ENCODE measurements at regions of chr1 and their contacts with region 1.

Region 1: DNA sequence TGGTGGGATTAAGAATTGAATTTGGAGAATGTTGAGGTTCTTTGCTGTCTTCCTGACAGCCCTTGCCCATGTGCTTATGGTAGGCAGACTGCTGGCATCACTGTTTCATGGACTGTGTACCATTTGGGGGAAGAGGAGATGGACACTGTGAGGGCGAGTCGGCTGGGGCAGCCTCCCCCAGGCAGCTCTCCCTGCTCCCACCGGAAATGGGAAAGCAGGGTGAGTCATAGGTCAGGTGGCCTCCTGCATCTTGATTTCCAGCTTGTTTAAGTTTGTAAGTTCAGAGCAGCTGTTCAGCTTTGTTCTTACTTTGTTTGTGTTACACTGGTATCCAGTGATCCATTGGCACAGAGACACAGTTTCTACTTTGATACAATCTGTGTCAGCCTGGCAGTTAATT is 87.2 kb upstream of the CNIH3 start:
- DNase-seq: no peak
- ATAC-seq: no peak
- H3K4me3 ChIP-seq: no peak overlapping the region
- H3K27ac ChIP-seq: no peak overlapping the region
- H3K4me1 ChIP-seq: no peaks in the 10 kb centered on the region
- H3K27me3 ChIP-seq: no peaks in the 10 kb centered on the region
- CTCF ChIP-seq: no peak

Region 2: DNA sequence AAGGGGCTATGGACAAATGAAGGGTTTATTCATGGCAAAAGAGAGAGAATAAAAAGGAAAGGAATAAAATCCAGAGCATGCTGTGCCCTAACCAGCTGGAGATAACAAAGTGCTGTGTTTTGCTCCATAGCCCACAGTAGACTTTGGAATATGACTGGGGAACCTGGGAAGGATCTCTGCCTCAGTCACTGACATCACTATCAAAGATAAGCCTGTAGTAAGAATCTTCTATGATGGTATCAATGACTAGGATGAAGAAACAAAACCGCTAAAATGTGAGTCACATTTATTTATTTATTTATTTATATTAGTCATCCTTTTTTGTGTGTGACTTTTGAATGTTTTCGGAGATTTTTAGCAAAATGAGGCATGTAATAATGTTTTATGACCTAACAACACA is 255.3 kb before region 1 on chr1:
- intact Hi-C with region 1: no loop called
- DNase-seq: no peak
- ATAC-seq: no peak
- H3K4me3 ChIP-seq: no peak overlapping the region
- H3K27ac ChIP-seq: no peak overlapping the region
- H3K4me1 ChIP-seq: peaks cover 0 to 4% (median 0%) of the 10 kb centered on the region in 9 donors
- H3K27me3 ChIP-seq: no peaks in the 10 kb centered on the region
- CTCF ChIP-seq: no peak

Region 3: DNA sequence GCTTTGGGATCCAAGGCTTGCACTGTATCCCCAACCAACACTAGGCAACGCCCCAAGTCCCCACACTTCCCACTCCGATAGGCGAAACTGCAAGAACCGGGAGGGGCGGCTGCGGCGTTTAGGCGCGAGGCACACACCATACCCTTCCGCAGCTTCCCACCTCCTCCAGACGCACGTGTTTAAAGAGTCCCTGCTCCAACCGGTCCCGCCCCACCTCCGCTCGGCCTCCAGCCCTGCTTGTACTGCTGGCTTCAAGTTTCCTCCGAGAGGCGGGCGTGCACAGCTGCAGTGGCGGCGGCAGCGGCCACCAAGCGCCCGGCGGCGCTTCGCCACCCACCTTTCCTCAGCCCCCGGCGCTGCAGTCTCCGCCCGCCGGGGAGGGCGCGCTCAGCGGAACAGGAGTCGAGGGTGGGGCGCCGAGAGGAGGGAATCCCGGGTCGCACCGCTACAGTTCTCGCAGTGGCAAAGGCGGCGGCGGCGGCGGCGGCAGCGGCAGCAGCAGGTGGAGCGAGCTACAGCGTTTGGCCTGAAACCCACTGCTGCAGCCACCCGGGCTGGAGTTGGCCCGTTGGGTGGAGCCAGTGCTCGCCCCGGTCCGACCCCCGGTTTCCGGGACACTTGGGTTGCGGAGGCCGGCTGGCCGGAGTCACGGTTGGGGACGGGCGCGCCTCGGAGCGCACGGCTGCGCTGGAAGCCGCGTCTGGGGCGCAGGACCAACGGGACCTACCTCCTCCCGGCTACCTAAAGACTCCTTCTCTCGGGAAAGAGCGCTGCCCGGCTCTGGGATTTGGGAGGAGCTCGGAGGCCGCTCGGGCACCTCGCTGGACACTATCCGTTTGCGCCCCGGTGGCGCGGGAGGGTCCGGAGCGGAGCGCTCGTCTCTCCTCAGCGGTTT is 87.2 kb after region 1 on chr1 and contains the start of gene CNIH3:
- intact Hi-C with region 1: loop called in 1 of 10 experiments (anchors 10 kb)
- DNase-seq: no peak
- ATAC-seq: peak in 2 of 8 donors; percentile 18 to 23
- H3K4me3 ChIP-seq: peak within 1 kb of the TSS; percentile 18 to 60 (median 44)
- H3K27ac ChIP-seq: no peak within 1 kb of the TSS
- H3K4me1 ChIP-seq: peaks cover 5 to 21% (median 18%) of the 10 kb centered on the region in 9 donors
- H3K27me3 ChIP-seq: peaks cover 6 to 75% (median 69%) of the 10 kb centered on the region in 7 donors
- CTCF ChIP-seq: no peak
- total RNA-seq, gene CNIH3: 0.28 to 1.8 (median 0.97) TPM

Measured in heart right ventricle (tissue), 16 donors.